Activated B cell treated with CpG ODN at 0.5 μM for 24 hours (primary cell): ENCODE measurements at regions of chr5 and their contacts with region 1.

Region 1: GRCh38 chr5:78792345-78793145 is 144.0 kb upstream of the LHFPL2 start:
- DNase-seq: no peak
- ATAC-seq: peak; percentile 82
- H3K4me3 Mint-ChIP-seq: peak overlapping the region; percentile 59
- H3K27ac Mint-ChIP-seq: peak overlapping the region; percentile 53
- H3K4me1 Mint-ChIP-seq: peaks cover 63% of the 10 kb centered on the region
- H3K27me3 Mint-ChIP-seq: no peaks in the 10 kb centered on the region
- CTCF ChIP-seq: no peak

Region 2: DNA sequence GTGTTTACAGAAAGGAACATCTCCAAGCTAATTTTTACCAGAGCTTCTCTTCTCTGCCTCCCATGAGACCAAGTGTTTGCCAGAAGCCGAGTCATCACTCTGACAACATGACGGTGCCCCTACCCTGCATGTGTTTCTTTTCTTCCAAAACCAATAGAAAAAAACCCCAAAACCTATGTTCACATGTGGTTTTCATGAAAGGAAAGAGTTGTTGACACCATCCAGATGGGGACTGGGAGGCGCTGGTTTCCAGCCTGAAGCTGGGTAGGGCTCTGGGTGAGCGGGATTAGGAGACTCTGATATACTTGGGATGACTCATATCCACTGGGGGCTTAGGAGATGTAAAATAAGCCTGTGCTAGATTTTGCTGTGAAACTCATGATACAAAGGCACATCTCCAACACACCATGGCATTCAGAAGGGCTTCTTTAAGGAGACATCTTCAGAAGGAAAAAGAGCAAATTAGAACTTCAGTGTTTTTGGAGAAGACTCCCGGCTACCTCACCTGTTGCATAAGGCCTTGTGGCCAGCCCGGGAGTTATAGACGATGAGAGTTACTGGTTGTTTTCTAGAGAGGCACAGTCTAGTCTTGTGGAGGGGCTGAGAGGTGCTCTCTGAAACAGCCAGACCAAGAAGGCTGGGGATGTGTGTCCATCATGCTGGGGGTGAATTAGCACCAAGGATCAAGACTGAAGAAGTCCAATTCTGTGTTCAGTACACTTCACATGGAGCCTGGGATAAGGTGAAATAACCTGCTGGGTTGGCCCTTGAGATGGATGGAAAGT is 35.1 kb before region 1 on chr5:
- CTCF ChIA-PET with region 1: no interaction called
- POLR2A ChIA-PET with region 1: interaction called, 14 read pairs
- intact Hi-C with region 1: loop called (anchors 1 kb)
- DNase-seq: no peak
- ATAC-seq: peak; percentile 38
- H3K4me3 Mint-ChIP-seq: peak overlapping the region; percentile 64
- H3K27ac Mint-ChIP-seq: peak overlapping the region; percentile 95
- H3K4me1 Mint-ChIP-seq: peaks cover 78% of the 10 kb centered on the region
- H3K27me3 Mint-ChIP-seq: no peaks in the 10 kb centered on the region
- CTCF ChIP-seq: no peak

Region 3: DNA sequence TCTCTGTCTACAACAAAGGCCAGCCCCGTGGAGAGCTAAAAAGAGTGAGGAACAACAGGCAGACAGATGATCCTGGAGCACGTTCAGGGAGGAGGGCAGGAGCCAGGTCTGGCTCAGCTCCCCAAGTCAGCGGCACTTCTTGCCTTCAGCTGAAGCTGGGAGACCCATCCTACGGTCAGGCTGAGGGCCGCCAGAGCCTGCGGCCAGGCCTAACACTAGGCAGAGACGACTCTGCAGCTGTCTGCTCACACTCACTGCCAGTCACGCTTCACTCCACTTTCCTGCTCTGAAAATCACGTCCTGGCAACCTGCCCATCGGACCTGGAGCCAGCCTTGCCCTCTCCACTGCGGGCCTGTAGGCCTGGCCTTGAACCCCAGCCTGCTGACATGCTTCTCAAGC is 16.9 kb after region 1 on chr5:
- CTCF ChIA-PET with region 1: no interaction called
- POLR2A ChIA-PET with region 1: no interaction called
- intact Hi-C with region 1: no loop called
- DNase-seq: no peak
- ATAC-seq: no peak
- H3K4me3 Mint-ChIP-seq: no peak overlapping the region
- H3K27ac Mint-ChIP-seq: no peak overlapping the region
- H3K4me1 Mint-ChIP-seq: peaks cover 9% of the 10 kb centered on the region
- H3K27me3 Mint-ChIP-seq: no peaks in the 10 kb centered on the region
- CTCF ChIP-seq: no peak

Region 4: GRCh38 chr5:78819707-78820106 is 27.2 kb after region 1 on chr5:
- CTCF ChIA-PET with region 1: no interaction called
- POLR2A ChIA-PET with region 1: no interaction called
- intact Hi-C with region 1: no loop called
- DNase-seq: no peak
- ATAC-seq: no peak
- H3K4me3 Mint-ChIP-seq: no peak overlapping the region
- H3K27ac Mint-ChIP-seq: no peak overlapping the region
- H3K4me1 Mint-ChIP-seq: peaks cover 26% of the 10 kb centered on the region
- H3K27me3 Mint-ChIP-seq: no peaks in the 10 kb centered on the region
- CTCF ChIP-seq: no peak

Region 5: GRCh38 chr5:78908173-78909061 is 115.9 kb after region 1 on chr5:
- CTCF ChIA-PET with region 1: no interaction called
- POLR2A ChIA-PET with region 1: interaction called, 13 read pairs
- intact Hi-C with region 1: no loop called
- DNase-seq: no peak
- ATAC-seq: no peak
- H3K4me3 Mint-ChIP-seq: peak overlapping the region; percentile 70
- H3K27ac Mint-ChIP-seq: peak overlapping the region; percentile 59
- H3K4me1 Mint-ChIP-seq: peaks cover 67% of the 10 kb centered on the region
- H3K27me3 Mint-ChIP-seq: no peaks in the 10 kb centered on the region
- CTCF ChIP-seq: no peak

Region 6: DNA sequence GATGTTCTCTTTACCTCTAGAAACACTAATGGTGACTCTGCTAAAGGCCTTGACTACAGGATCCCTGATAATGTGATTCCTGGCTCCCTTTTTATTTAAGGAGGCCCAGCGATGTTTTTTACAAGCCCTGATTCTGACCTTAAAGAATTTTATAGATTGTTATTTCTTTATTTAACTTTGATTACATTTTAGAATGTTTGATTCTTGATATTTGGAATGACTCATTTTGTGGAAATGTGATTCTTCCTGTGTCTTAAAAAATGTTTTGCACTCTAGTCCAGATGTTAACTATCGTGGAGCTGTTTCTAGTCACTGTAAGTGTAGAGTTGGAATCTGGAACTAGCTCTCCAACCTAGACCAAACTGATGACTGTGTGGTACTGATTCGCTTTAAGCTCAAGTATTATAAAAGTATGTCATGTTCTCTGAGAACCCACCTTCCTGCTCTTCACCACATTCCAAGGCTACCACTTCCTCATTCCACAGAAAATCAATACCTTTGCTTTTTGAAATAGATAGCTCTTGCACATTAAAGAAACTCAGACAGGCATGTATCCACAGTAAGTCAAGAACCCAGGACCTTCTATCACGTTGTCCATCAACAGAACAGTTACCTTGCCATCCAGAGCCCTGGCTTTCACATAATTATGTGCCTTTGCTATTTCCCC is 508.6 kb after region 1 on chr5:
- CTCF ChIA-PET with region 1: no interaction called
- POLR2A ChIA-PET with region 1: no interaction called
- intact Hi-C with region 1: no loop called
- DNase-seq: no peak
- ATAC-seq: no peak
- H3K4me3 Mint-ChIP-seq: no peak overlapping the region
- H3K27ac Mint-ChIP-seq: no peak overlapping the region
- H3K4me1 Mint-ChIP-seq: no peaks in the 10 kb centered on the region
- H3K27me3 Mint-ChIP-seq: no peaks in the 10 kb centered on the region
- CTCF ChIP-seq: no peak